ENCODE measurements at regions of chr14 and their contacts with region 1.

Region 1: GRCh38 chr14:49867831-49868723 is 15.5 kb upstream of the NEMF start:
- DNase-seq: peak; percentile 78
- ATAC-seq: peak; percentile 95
- H3K4me3 ChIP-seq: peak overlapping the region; percentile 51 to 65
- H3K27ac ChIP-seq: peak overlapping the region; percentile 96
- H3K4me1 ChIP-seq: peaks cover 20% of the 10 kb centered on the region
- H3K27me3 ChIP-seq: no peaks in the 10 kb centered on the region
- CTCF ChIP-seq: no peak

Region 2: GRCh38 chr14:49732896-49733295 is 135.2 kb before region 1 on chr14:
- CTCF ChIA-PET with region 1: no interaction called
- POLR2A ChIA-PET with region 1: no interaction called
- in situ Hi-C with region 1: no loop called
- intact Hi-C with region 1: no loop called
- DNase-seq: no peak
- ATAC-seq: no peak
- H3K4me3 ChIP-seq: no peak overlapping the region
- H3K27ac ChIP-seq: no peak overlapping the region
- H3K4me1 ChIP-seq: no peaks in the 10 kb centered on the region
- H3K27me3 ChIP-seq: no peaks in the 10 kb centered on the region
- CTCF ChIP-seq: no peak

Region 3: DNA sequence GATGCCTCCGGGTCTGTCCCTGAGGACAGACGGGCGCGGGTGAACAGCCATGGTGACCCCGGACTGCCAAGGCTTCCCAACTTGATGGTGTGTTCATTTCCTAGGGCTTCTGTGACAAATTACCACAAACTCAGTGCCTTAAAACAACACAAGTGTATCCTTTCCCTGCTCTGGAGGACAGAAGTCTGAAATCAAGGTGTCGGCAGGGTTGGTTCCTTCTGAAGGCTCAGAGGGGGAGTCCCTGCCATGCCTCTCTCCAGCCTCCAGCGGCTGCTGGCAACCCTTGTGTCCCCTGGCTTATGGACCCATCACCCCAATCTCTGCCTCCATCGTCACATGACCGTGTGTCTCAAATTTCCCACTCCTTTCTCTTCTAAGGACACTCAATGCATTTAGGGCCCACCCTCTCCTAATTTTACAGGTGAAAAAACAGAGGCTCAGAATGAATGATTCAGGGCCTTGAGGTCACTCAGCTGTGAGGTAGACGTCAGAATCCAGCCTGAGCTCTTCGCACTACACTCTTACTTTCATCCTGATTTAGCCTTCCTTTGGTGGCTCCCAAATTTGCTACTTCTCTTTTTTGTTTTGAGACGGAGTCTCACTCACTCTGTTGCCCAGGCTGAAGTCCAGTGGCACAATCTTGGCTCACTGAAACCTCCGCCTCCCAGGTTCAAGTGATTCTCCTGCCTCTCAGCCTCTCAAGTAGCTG is 202.9 kb after region 1 on chr14:
- CTCF ChIA-PET with region 1: no interaction called
- POLR2A ChIA-PET with region 1: interaction called, 10 read pairs
- in situ Hi-C with region 1: no loop called
- intact Hi-C with region 1: no loop called
- DNase-seq: no peak
- ATAC-seq: no peak
- H3K4me3 ChIP-seq: no peak overlapping the region
- H3K27ac ChIP-seq: peak overlapping the region; percentile 44; the same call in 1 of the 2 replicates
- H3K4me1 ChIP-seq: no peaks in the 10 kb centered on the region
- H3K27me3 ChIP-seq: no peaks in the 10 kb centered on the region
- CTCF ChIP-seq: no peak

Region 4: DNA sequence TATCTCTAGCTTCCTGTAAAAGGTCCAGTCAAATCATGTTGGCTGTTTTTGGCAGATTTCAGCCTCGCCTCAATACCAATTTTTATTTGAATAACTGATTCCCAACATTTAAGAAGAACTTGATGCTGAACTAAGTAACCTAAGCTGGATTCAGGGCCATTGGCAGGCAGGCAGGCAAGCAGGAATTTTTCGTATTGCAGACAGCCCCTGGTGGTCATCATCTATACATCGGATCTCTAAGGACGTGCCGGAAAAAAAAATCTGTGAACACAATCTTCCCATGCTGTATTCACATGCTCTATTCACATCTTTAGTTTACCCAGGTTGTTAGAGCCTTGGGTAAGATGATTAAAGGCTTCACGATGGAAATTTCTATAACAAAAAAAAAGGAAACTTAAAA is 241.3 kb after region 1 on chr14:
- CTCF ChIA-PET with region 1: no interaction called
- POLR2A ChIA-PET with region 1: no interaction called
- in situ Hi-C with region 1: no loop called
- intact Hi-C with region 1: loop called (anchors 2 kb)
- DNase-seq: no peak
- ATAC-seq: no peak
- H3K4me3 ChIP-seq: no peak overlapping the region
- H3K27ac ChIP-seq: no peak overlapping the region
- H3K4me1 ChIP-seq: no peaks in the 10 kb centered on the region; the same call in 1 of the 2 replicates
- H3K27me3 ChIP-seq: no peaks in the 10 kb centered on the region
- CTCF ChIP-seq: peak; percentile 37; the same call in 1 of the 2 replicates

Region 5: GRCh38 chr14:50186107-50186506 is 318.0 kb after region 1 on chr14:
- CTCF ChIA-PET with region 1: no interaction called
- POLR2A ChIA-PET with region 1: interaction called, 13 read pairs
- in situ Hi-C with region 1: no loop called
- intact Hi-C with region 1: no loop called
- DNase-seq: no peak
- ATAC-seq: no peak
- H3K4me3 ChIP-seq: no peak overlapping the region
- H3K27ac ChIP-seq: no peak overlapping the region
- H3K4me1 ChIP-seq: no peaks in the 10 kb centered on the region
- H3K27me3 ChIP-seq: no peaks in the 10 kb centered on the region
- CTCF ChIP-seq: no peak